WTC11 (cell line): ENCODE measurements at regions of chr1 and their contacts with region 1.

Region 1: DNA sequence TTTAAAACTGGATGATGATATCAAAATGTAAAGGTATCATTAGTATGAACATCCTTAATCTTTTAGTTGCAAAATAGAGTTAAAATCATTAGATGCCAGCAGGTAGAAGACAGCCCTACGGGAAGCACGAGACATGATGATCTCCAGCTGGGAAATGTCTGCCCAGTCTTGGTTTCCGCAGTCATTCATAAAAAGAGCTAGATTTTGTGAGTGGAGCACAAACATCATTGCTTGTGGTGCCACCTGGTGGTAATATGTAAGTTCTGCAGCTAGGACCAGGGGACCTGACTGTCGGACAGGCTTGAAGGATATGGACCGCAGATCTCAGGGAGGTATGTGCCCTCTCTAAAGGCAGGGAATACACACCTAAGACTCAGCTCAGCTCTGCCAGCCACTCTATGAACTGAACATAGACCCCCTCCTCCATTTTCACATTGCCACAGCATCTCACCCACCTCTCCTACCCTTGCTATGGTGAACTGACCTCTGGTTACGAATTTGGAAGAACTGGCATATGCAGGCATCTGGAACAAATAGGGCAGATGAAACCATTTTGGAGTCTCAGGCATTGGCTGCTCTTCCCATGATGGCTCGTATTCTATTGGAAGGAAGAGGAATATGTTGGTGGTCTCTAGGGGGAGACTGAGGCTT is 9.2 kb downstream of the FCMR start:
- DNase-seq: peak; percentile 70
- ATAC-seq: peak; percentile 43
- H3K4me3 Mint-ChIP-seq: no peak overlapping the region
- H3K27ac Mint-ChIP-seq: no peak overlapping the region
- H3K4me1 Mint-ChIP-seq: peaks cover 8% of the 10 kb centered on the region
- H3K27me3 Mint-ChIP-seq: peaks cover 40% of the 10 kb centered on the region
- CTCF ChIP-seq: peak; percentile 81

Region 2: GRCh38 chr1:206635080-206635977 is 277.2 kb before region 1 on chr1 and contains the start of gene DYRK3:
- CTCF ChIA-PET with region 1: interaction called, 21 read pairs
- POLR2A ChIA-PET with region 1: no interaction called
- DNase-seq: peak; percentile 97
- ATAC-seq: peak; percentile 85
- H3K4me3 Mint-ChIP-seq: peak within 1 kb of the TSS; percentile 76
- H3K27ac Mint-ChIP-seq: peak within 1 kb of the TSS; percentile 74
- H3K4me1 Mint-ChIP-seq: peaks cover 34% of the 10 kb centered on the region
- H3K27me3 Mint-ChIP-seq: no peaks in the 10 kb centered on the region; the same call in 1 of the 2 replicates
- CTCF ChIP-seq: no peak
- total RNA-seq, gene DYRK3: 6.7 to 7.8 TPM (median 6.7 TPM) in 3 replicates

Region 3: GRCh38 chr1:206770531-206771337 is 141.8 kb before region 1 on chr1 and contains the start of gene IL19:
- CTCF ChIA-PET with region 1: interaction called, 14 read pairs
- POLR2A ChIA-PET with region 1: no interaction called
- DNase-seq: no peak
- ATAC-seq: peak; percentile 62
- H3K4me3 Mint-ChIP-seq: no peak within 1 kb of the TSS
- H3K27ac Mint-ChIP-seq: no peak within 1 kb of the TSS
- H3K4me1 Mint-ChIP-seq: peaks cover 33% of the 10 kb centered on the region
- H3K27me3 Mint-ChIP-seq: peaks cover 4% of the 10 kb centered on the region
- CTCF ChIP-seq: no peak
- total RNA-seq, gene IL19: not detected in 3 replicates

Region 4: DNA sequence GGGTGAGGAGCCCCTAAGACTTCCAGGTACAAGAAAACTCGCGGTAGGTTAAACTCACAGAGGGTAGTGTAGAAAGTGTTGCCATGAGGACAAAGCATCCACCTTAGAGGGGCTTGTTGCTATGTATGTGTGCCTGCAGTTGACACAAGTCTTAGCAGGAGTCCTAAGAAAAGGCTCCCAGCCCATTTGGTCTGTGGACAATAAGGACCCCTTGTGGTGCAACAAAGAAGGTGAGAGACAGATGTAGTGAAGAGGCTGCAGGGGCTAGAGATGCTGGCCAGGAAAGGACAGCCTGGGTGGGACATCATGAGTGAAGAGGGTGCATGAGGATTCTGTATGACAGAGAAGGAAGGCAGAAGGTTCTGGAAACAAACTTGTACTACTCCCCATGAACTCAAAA is 104.0 kb before region 1 on chr1:
- CTCF ChIA-PET with region 1: interaction called, 31 read pairs
- POLR2A ChIA-PET with region 1: no interaction called
- DNase-seq: no peak
- ATAC-seq: peak; percentile 86
- H3K4me3 Mint-ChIP-seq: no peak overlapping the region
- H3K27ac Mint-ChIP-seq: no peak overlapping the region
- H3K4me1 Mint-ChIP-seq: no peaks in the 10 kb centered on the region
- H3K27me3 Mint-ChIP-seq: peaks cover 2% of the 10 kb centered on the region; the same call in 1 of the 2 replicates
- CTCF ChIP-seq: no peak

Region 5: DNA sequence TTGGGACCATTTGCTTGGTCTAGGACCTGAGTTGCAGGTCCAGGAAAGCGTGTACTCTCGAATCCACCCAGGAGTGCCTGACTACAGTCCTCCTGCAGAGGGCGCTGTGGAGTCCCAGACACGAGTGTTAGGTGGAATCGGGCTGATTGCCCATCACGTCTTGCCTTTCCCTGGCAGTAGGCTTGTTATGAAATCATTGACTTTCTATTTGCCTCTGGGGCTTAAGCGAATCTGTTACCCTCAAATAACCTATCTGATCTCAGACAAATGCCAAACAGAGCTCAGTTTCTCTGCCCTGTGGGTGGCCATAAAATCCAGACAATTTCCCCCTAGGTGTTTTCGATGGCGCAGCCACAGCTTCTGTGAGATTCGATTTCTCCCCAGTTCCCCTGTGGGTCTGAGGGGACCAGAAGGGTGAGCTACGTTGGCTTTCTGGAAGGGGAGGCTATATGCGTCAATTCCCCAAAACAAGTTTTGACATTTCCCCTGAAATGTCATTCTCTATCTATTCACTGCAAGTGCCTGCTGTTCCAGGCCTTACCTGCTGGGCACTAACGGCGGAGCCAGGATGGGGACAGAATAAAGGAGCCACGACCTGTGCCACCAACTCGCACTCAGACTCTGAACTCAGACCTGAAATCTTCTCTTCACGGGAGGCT is 47.4 kb before region 1 on chr1 and contains the start of gene IL20:
- CTCF ChIA-PET with region 1: interaction called, 15 read pairs
- POLR2A ChIA-PET with region 1: no interaction called
- DNase-seq: peak; percentile 91
- ATAC-seq: peak; percentile 93
- H3K4me3 Mint-ChIP-seq: no peak within 1 kb of the TSS
- H3K27ac Mint-ChIP-seq: no peak within 1 kb of the TSS
- H3K4me1 Mint-ChIP-seq: 0 out of 2 replicates have a peak, but pooled peaks cover 3% of the 10 kb centered on the region
- H3K27me3 Mint-ChIP-seq: peaks cover 18% of the 10 kb centered on the region
- CTCF ChIP-seq: peak; percentile 90
- total RNA-seq, gene IL20: not detected in 3 replicates

Region 6: DNA sequence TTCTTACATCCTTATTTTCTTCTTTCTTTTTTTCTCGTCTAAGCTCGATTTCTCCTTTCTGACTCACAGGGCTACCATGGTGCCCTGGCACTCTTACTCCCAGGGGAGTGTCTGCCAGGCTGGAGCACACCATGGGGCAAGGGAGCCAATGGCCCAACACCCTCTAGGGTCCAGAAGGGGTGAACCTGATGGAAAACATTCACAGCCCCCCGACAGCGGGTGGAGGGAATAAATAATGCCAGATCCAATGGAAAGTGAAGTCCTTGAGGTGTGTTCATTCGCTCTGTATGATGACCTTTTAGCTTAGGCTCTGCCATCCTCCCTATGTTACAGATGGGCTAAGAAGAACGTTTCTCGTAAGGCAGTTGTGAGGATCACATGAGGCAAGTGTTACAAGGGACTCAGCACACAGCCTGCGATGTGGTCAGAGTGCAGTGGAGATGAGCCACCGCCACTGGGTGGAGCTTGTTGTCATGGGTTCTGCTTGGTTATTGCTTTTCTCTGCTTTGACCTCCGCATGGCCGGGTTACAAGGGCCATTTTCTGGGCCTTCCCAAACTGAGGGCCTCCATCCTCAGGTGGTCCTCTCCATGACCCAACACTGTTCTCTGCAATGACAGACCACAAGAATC is 12.7 kb after region 1 on chr1:
- CTCF ChIA-PET with region 1: interaction called, 14 read pairs
- POLR2A ChIA-PET with region 1: no interaction called
- DNase-seq: peak; percentile 25
- ATAC-seq: peak; percentile 85
- H3K4me3 Mint-ChIP-seq: no peak overlapping the region
- H3K27ac Mint-ChIP-seq: no peak overlapping the region
- H3K4me1 Mint-ChIP-seq: no peaks in the 10 kb centered on the region
- H3K27me3 Mint-ChIP-seq: no peaks in the 10 kb centered on the region; the same call in 1 of the 2 replicates
- CTCF ChIP-seq: no peak

Region 7: DNA sequence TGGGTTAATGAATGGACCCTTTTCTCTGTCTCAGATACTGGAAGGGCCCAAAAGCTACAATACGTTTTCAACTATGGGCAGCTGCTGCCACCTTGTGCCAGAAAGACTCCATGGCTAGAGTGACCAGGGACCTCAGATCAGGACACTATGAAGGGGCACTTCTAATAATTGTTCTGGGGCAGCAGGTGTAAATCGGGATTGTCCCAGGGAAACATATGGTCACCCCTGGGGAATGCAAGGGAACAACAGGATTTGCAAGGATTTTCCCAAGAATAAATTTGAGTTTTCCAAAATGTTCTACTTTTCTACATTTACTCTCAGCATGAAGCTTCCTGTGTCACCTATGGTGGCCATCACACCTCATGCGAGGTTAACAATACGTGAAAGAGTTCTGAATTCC is 69.6 kb after region 1 on chr1:
- CTCF ChIA-PET with region 1: interaction called, 58 read pairs
- POLR2A ChIA-PET with region 1: no interaction called
- DNase-seq: peak; percentile 59
- ATAC-seq: peak; percentile 71
- H3K4me3 Mint-ChIP-seq: no peak overlapping the region
- H3K27ac Mint-ChIP-seq: no peak overlapping the region
- H3K4me1 Mint-ChIP-seq: peaks cover 39% of the 10 kb centered on the region
- H3K27me3 Mint-ChIP-seq: peaks cover 43% of the 10 kb centered on the region
- CTCF ChIP-seq: peak; percentile 21; the same call in 1 of the 2 replicates